ENCODE measurements at regions of chr6 and their contacts with region 1.

Region 1: DNA sequence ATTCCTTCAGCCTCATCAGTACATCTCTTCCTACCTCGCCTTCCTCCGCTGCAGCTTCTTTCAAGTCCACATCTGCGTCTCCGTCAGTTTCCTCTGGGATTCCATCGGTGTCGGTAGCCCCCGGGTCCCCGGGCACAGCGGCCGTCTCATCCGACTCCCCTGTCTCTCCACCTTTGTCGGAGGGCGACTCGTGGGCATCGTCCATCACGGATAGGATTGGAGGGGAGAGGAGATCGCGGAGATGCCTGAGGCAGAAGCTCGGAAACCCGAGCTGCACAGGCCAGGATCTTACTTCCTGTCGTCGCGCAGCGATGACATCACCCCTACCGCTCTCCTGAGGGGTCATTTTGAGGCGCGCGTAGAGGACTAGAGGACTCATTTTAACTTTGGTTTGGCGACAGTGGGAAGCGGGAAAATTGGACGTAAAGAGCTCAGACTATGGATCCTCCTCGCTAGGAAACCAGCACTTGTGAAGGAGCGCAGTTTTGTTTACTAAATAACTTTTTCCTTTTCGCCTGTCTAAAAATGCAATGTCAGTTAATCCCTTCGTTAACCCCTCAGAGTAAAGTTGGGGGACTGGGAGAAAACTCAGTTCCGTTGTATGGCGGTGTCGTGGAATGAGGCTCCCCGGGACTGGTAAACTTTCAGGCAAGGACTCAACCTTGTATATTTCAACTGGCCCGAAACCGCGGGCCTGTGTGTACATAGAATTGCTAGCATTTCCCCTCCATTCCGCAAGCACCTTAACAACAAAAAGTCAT is at the start of gene TAF11:
- DNase-seq: peak; percentile 95
- total RNA-seq, gene TAF11: 20.0 TPM

Region 2: GRCh38 chr6:34664256-34664971 is 223.5 kb before region 1 on chr6:
- intact Hi-C with region 1: no loop called
- DNase-seq: no peak

Region 3: GRCh38 chr6:34791701-34792235 is 96.2 kb before region 1 on chr6 and contains the start of gene BLTP3A:
- intact Hi-C with region 1: loop called (anchors 5 kb)
- DNase-seq: peak; percentile 83
- total RNA-seq, gene BLTP3A: 18.1 TPM

Region 4: GRCh38 chr6:34973547-34974248 is 85.8 kb after region 1 on chr6:
- intact Hi-C with region 1: loop called (anchors 5 kb)
- DNase-seq: no peak

Region 5: GRCh38 chr6:35181933-35182612 is 294.1 kb after region 1 on chr6:
- intact Hi-C with region 1: no loop called
- DNase-seq: no peak